ENCODE measurements at regions of chr16 and their contacts with region 1.

Region 1: GRCh38 chr16:88550246-88550661 is 19.9 kb upstream of the ZC3H18 start:
- DNase-seq: no peak

Region 2: DNA sequence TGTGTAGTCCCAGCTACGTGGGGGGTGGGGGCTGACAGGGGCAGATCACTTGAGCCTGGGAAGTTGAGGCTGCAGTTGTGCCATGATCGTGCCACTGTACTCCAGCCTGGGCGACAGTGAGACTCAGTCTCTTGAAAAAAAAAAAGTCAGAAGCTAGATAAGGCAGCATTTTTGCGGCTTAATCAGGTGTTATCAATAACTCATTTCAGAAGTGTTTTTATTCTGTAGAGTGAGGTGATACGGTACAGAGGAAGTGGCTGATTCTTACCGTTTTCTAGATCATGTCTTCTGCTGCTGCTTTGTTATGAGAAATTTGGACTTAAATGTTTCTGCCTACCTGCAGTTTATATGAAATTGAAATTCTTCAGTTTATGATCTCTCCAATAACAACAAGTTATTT is 38.5 kb after region 1 on chr16:
- intact Hi-C with region 1: loop called in 1 of 2 experiments (anchors 1 kb)
- DNase-seq: no peak